ENCODE measurements at regions of chr9 and their contacts with region 1.

Region 1: DNA sequence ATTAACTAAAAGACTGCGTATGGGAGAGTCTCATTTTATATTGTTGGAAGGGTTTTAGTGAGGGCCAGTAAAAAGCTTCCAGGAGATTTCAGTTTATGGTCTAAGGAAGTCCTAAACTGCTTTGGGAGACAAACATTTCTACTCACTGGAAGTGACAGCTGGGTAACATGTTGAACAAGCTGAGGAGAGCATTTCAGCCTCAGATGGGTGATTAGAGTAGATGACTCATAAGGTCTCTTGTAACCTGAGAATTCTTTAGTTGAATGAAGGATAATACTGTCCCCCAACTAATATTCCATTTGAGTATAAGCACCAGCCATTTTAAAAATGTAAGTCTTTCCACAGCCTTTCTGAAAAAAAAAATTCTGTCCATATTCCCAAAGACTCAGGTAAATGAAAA is 218.0 kb upstream of the C9orf72 start:
- DNase-seq: no peak
- ATAC-seq: no peak

Region 2: GRCh38 chr9:27600256-27600655 is 191.1 kb before region 1 on chr9:
- intact Hi-C with region 1: no loop called
- DNase-seq: no peak
- ATAC-seq: peak; percentile 85

Region 3: DNA sequence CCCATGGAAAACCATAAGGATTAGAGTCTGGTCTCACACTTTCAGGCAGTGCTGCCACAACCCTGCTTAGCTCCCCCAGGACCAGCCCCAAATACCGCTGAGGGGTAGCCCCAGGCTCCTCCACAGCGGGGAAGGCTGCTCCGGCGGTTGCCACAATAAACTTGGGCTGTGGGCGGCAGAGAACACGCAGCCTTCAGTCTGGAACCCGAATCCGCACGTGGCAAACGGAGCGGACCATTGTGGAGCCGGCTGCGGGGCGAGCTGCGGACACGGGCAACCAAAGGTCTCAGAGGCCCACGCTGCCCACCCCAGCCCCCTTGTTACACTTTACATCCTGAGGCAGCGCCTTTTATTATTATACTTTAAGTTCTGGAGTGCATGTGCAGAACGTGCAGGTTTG is 180.7 kb before region 1 on chr9:
- intact Hi-C with region 1: no loop called
- DNase-seq: no peak
- ATAC-seq: no peak

Region 4: DNA sequence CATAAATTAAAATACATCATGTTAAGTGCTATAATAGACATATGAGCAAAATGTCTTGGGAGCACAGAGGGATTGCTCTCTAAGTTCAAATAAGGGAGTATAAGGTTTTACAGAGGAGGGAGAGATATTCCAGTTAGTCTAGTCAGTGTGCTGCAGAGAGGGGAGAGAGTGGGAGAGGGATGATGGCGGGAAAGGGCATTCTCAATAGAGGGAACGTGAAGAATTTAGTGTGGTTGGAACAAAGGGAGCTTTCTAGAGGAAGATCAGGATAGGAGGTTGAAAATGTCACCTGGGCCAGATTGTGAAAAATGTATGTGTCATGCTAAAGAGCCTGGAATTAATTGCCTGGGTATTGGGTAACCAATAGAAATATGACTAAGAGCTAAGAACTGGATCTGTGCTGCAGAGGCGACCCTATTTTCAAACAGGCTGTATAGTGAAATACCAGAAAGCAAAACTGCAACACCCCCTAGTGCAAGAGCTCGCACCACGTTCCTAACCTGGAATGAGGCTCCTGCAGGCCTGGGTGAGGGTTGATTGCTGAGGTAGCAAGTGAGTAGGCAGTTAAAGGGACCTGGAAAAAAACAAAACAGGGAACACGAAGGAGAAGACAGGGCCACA is 573.8 kb after region 1 on chr9:
- intact Hi-C with region 1: loop called (anchors 5 kb)
- DNase-seq: no peak
- ATAC-seq: no peak